Natural killer cell (primary cell): ENCODE measurements at regions of chr7 and their contacts with region 1.

Region 1: DNA sequence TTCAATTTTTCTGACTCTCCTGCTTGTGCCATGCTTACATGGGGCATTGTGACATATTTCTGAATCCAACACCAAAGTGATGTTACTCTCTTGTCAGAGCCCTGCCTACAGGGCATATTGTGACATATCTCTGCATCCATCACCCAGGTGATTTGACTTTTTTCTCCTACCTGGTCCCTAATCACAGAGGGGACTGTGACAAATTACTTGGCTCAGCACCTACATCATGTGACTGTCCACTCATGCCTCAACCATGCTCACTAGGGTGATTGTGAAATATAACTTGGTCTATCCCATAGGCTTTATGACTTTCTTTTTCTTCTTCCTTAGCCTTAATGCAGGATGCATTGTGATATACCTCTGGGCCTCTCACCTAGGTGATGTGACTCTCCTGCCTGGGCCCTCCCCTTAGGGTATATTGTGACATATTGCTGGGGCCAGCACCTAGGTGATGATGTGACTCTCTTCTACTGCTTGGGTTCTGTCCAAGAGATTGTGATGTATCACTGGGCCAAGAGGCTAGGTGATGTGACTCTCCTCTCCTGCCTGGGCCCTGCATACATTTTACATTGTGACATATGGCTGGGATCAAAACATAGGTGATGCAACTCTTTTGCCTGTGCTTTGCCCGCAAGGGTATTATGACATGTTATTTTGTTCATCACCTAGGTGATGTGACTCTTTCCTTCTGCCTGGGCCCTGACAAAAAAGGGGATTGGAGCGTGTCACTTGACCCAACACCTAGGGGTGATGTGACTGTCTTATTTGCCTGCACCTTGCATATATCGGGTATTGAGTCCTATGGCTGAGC is 14.8 kb upstream of the ZNF107 start:
- DNase-seq: no peak
- ATAC-seq: no peak
- H3K4me3 ChIP-seq: no peak overlapping the region
- H3K4me3 Mint-ChIP-seq: no peak overlapping the region
- H3K27ac ChIP-seq: no peak overlapping the region
- H3K27ac Mint-ChIP-seq: no peak overlapping the region
- H3K4me1 ChIP-seq: no peaks in the 10 kb centered on the region
- H3K4me1 Mint-ChIP-seq: no peaks in the 10 kb centered on the region
- H3K27me3 ChIP-seq: no peaks in the 10 kb centered on the region
- H3K27me3 Mint-ChIP-seq: no peaks in the 10 kb centered on the region
- CTCF ChIP-seq: no peak

Region 2: GRCh38 chr7:64599355-64599754 is 51.8 kb before region 1 on chr7:
- intact Hi-C with region 1: loop called (anchors 10 kb)
- DNase-seq: no peak
- ATAC-seq: no peak
- H3K4me3 ChIP-seq: no peak overlapping the region
- H3K4me3 Mint-ChIP-seq: no peak overlapping the region
- H3K27ac ChIP-seq: no peak overlapping the region
- H3K27ac Mint-ChIP-seq: no peak overlapping the region
- H3K4me1 ChIP-seq: no peaks in the 10 kb centered on the region
- H3K4me1 Mint-ChIP-seq: no peaks in the 10 kb centered on the region
- H3K27me3 ChIP-seq: no peaks in the 10 kb centered on the region
- H3K27me3 Mint-ChIP-seq: no peaks in the 10 kb centered on the region
- CTCF ChIP-seq: no peak